GM12878 (cell line): ENCODE measurements at regions of chr15 and their contacts with region 1.

Region 1: DNA sequence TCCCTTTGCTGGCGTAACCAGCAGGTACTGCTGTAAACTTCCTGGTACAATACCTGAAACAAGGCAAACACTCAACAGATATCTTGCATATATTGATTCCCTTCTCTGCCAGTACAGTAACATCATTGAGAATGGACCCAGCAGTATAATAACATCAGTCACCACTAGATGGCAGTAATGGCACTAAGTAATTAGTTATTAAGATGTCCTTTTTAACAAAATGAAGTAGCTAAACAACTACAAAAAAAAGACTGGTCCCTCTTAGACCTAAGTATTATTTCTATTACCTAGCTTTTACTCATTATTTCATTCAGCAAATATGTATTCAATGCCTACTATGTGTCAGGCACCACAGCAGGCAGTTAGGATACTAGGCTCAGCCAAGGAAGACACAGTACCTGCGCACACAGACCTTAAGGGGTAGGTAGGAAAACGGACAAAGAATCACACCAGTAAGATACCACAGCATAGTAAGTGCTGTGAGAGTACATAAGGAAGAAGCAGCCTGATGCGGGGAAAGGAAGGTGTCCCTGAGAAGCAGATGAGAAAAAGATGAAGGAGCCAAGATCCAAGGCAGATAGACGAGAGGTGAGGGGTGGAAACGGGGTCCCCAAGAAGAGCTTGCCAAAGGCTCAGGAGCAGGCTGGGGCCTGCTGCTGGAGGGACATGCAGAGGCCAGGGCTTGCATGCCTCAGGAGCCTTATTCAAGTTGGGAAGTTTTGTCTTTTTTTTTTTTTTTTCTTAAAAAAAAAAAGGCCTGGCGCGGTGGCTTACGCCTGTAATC is 102.8 kb upstream of the CHD2 start:
- DNase-seq: peak; percentile 40
- ATAC-seq: peak; percentile 93
- H3K4me3 ChIP-seq: no peak overlapping the region
- H3K27ac ChIP-seq: no peak overlapping the region
- H3K4me1 ChIP-seq: no peaks in the 10 kb centered on the region
- H3K27me3 ChIP-seq: no peaks in the 10 kb centered on the region; a peak in 1 of 4 replicates
- CTCF ChIP-seq: peak; percentile 51 to 69 (median 65); a peak in 5 of 6 replicates
- EP300 ChIP-seq: no peak
- POLR2A ChIP-seq: no peak
- RAD21 ChIP-seq: peak; percentile 64

Region 2: GRCh38 chr15:92480381-92480780 is 317.0 kb before region 1 on chr15:
- CTCF ChIA-PET with region 1: no interaction called
- POLR2A ChIA-PET with region 1: no interaction called
- RAD21 ChIA-PET with region 1: no interaction called
- SMC1A ChIA-PET with region 1: no interaction called
- in situ Hi-C with region 1: no loop called
- intact Hi-C with region 1: no loop called
- DNase-seq: no peak
- ATAC-seq: no peak
- H3K4me3 ChIP-seq: no peak overlapping the region
- H3K27ac ChIP-seq: no peak overlapping the region
- H3K4me1 ChIP-seq: no peaks in the 10 kb centered on the region
- H3K27me3 ChIP-seq: peaks cover 0 to 1% of the 10 kb centered on the region in 2 experiments; a peak in 1 of 4 replicates
- CTCF ChIP-seq: no peak
- EP300 ChIP-seq: no peak
- POLR2A ChIP-seq: no peak
- RAD21 ChIP-seq: no peak

Region 3: GRCh38 chr15:92903941-92904831 is 106.8 kb after region 1 on chr15:
- CTCF ChIA-PET with region 1: interaction called, 16 read pairs
- POLR2A ChIA-PET with region 1: interaction called, 5 read pairs
- RAD21 ChIA-PET with region 1: interaction called, 12 read pairs
- SMC1A ChIA-PET with region 1: interaction called, 25 read pairs
- in situ Hi-C with region 1: no loop called
- intact Hi-C with region 1: no loop called
- DNase-seq: peak; percentile 94
- ATAC-seq: peak; percentile 78
- H3K4me3 ChIP-seq: peak overlapping the region; percentile 95
- H3K27ac ChIP-seq: peak overlapping the region; percentile 98
- H3K4me1 ChIP-seq: peaks cover 13% of the 10 kb centered on the region
- H3K27me3 ChIP-seq: no peaks in the 10 kb centered on the region
- CTCF ChIP-seq: no peak
- EP300 ChIP-seq: peak in 1 of 2 experiments; percentile 49; a peak in 1 of 4 replicates
- POLR2A ChIP-seq: peak; percentile 93
- RAD21 ChIP-seq: no peak

Region 4: DNA sequence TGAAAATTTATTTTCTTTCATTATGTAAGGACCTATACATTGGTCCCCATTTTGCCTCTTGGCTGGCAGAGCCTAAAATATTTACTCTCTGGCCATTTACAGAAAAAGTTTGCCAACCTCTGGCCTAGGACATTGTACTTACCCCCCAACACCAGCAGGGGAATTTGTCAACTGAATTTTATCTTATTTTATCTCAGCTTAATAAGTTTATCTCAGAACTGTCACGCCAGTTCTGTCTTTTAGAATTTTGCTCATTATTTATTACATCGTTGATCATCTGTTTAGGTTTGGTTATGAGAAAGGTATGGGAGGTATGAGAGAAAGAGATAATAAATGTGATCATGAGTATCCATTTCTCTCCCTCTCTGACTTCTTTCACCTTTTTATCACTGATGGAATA is 141.0 kb after region 1 on chr15:
- CTCF ChIA-PET with region 1: interaction called, 14 read pairs
- POLR2A ChIA-PET with region 1: no interaction called
- RAD21 ChIA-PET with region 1: interaction called, 5 read pairs
- SMC1A ChIA-PET with region 1: interaction called, 5 read pairs
- in situ Hi-C with region 1: no loop called
- intact Hi-C with region 1: no loop called
- DNase-seq: no peak
- ATAC-seq: peak; percentile 37; the same call in 2 of the 3 replicates
- H3K4me3 ChIP-seq: no peak overlapping the region
- H3K27ac ChIP-seq: no peak overlapping the region
- H3K4me1 ChIP-seq: no peaks in the 10 kb centered on the region
- H3K27me3 ChIP-seq: no peaks in the 10 kb centered on the region
- CTCF ChIP-seq: 0 out of 6 replicates have a peak, but pooled peaks of 2 of the 3 experiments have one; percentile 14 to 23
- EP300 ChIP-seq: no peak
- POLR2A ChIP-seq: no peak
- RAD21 ChIP-seq: no peak

Region 5: GRCh38 chr15:92968926-92969651 is 171.7 kb after region 1 on chr15:
- CTCF ChIA-PET with region 1: interaction called, 8 read pairs
- POLR2A ChIA-PET with region 1: no interaction called
- RAD21 ChIA-PET with region 1: interaction called, 3 read pairs
- SMC1A ChIA-PET with region 1: interaction called, 10 read pairs
- in situ Hi-C with region 1: no loop called
- intact Hi-C with region 1: no loop called
- DNase-seq: no peak
- ATAC-seq: peak; percentile 57
- H3K4me3 ChIP-seq: no peak overlapping the region
- H3K27ac ChIP-seq: no peak overlapping the region; the same call in 1 of the 2 replicates
- H3K4me1 ChIP-seq: no peaks in the 10 kb centered on the region
- H3K27me3 ChIP-seq: no peaks in the 10 kb centered on the region
- CTCF ChIP-seq: 0 out of 6 replicates have a peak, but pooled peaks of 1 of the 3 experiments have one; percentile 4
- EP300 ChIP-seq: no peak
- POLR2A ChIP-seq: no peak
- RAD21 ChIP-seq: no peak

Region 6: DNA sequence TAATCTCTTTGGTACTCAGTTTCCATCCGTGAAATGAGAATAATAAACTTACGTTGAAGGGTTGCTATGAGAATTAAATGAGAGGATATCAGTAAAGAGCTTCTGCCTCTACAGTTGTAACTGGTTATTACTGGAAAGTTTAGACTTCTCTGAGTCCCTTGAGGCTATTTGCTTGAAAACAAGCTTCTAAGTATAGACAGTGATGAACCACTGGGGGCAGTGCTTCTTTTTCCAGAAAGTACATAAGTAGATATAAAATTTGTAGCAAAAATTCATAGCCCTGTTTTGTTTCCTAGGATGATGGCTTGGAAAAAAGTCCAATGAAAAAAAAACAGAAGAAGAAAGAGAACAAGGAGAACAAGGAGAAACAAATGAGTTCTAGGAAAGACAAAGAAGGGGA is 204.5 kb after region 1 on chr15:
- CTCF ChIA-PET with region 1: interaction called, 14 read pairs
- POLR2A ChIA-PET with region 1: interaction called, 6 read pairs
- RAD21 ChIA-PET with region 1: no interaction called
- SMC1A ChIA-PET with region 1: interaction called, 3 read pairs
- in situ Hi-C with region 1: loop called (anchors 10 kb)
- intact Hi-C with region 1: loop called (anchors 10 kb)
- DNase-seq: no peak
- ATAC-seq: peak; percentile 50; the same call in 2 of the 3 replicates
- H3K4me3 ChIP-seq: no peak overlapping the region
- H3K27ac ChIP-seq: no peak overlapping the region
- H3K4me1 ChIP-seq: no peaks in the 10 kb centered on the region
- H3K27me3 ChIP-seq: no peaks in the 10 kb centered on the region
- CTCF ChIP-seq: no peak
- EP300 ChIP-seq: no peak
- POLR2A ChIP-seq: no peak
- RAD21 ChIP-seq: no peak